ENCODE measurements at regions of chr6 and their contacts with region 1.

Region 1: GRCh38 chr6:138001750-138002349 is 105.4 kb downstream of the PERP start:
- DNase-seq: peak in 2 of 5 donors; percentile 13 to 35
- H3K4me3 ChIP-seq: no peak overlapping the region
- H3K27ac ChIP-seq: no peak overlapping the region
- H3K4me1 ChIP-seq: no peaks in the 10 kb centered on the region
- H3K27me3 ChIP-seq: no peaks in the 10 kb centered on the region
- CTCF ChIP-seq: peak in 2 of 3 donors; percentile 23 to 41
- EP300 ChIP-seq: no peak
- POLR2A ChIP-seq: no peak

Region 2: GRCh38 chr6:138109042-138109997 is 107.5 kb after region 1 on chr6:
- intact Hi-C with region 1: loop called in 1 of 4 experiments (anchors 10 kb)
- DNase-seq: peak; percentile 32 to 72 (median 57)
- H3K4me3 ChIP-seq: no peak overlapping the region
- H3K27ac ChIP-seq: no peak overlapping the region
- H3K4me1 ChIP-seq: peaks cover 1% of the 10 kb centered on the region
- H3K27me3 ChIP-seq: no peaks in the 10 kb centered on the region
- CTCF ChIP-seq: peak; percentile 57 to 80 (median 60)
- EP300 ChIP-seq: no peak
- POLR2A ChIP-seq: no peak

Measured in ovary (tissue), 10 donors.